CD4-positive, alpha-beta T cell (primary cell): ENCODE measurements at regions of chr14 and their contacts with region 1.

Region 1: GRCh38 chr14:61321385-61322010 is at the start of gene PRKCH:
- DNase-seq: peak; percentile 72 to 93 (median 84)
- ATAC-seq: peak; percentile 73
- H3K4me3 ChIP-seq: peak within 1 kb of the TSS; percentile 95
- H3K4me3 Mint-ChIP-seq: peak within 1 kb of the TSS; percentile 96
- H3K27ac ChIP-seq: peak within 1 kb of the TSS; percentile 66 to 87
- H3K27ac Mint-ChIP-seq: no peak within 1 kb of the TSS
- H3K4me1 ChIP-seq: peaks cover 22% of the 10 kb centered on the region
- H3K4me1 Mint-ChIP-seq: peaks cover 26% of the 10 kb centered on the region
- H3K27me3 ChIP-seq: no peaks in the 10 kb centered on the region
- H3K27me3 Mint-ChIP-seq: no peaks in the 10 kb centered on the region
- CTCF ChIP-seq: peak; percentile 32
- total RNA-seq, gene PRKCH: 378 to 385 TPM

Region 2: GRCh38 chr14:61335671-61336275 is 14.3 kb after region 1 on chr14:
- CTCF ChIA-PET with region 1: interaction called, 29 read pairs
- POLR2A ChIA-PET with region 1: interaction called, 185 read pairs
- intact Hi-C with region 1: loop called (anchors 1 to 2 kb)
- DNase-seq: peak in 5 of 14 experiments; percentile 42 to 83 (median 78)
- ATAC-seq: peak; percentile 62
- H3K4me3 ChIP-seq: peak overlapping the region; percentile 6
- H3K4me3 Mint-ChIP-seq: peak overlapping the region; percentile 87
- H3K27ac ChIP-seq: peak overlapping the region; percentile 85 to 98
- H3K27ac Mint-ChIP-seq: peak overlapping the region; percentile 99
- H3K4me1 ChIP-seq: peaks cover 78% of the 10 kb centered on the region
- H3K4me1 Mint-ChIP-seq: peaks cover 82% of the 10 kb centered on the region
- H3K27me3 ChIP-seq: no peaks in the 10 kb centered on the region
- H3K27me3 Mint-ChIP-seq: no peaks in the 10 kb centered on the region
- CTCF ChIP-seq: no peak

Region 3: GRCh38 chr14:61347826-61348443 is 26.4 kb after region 1 on chr14:
- CTCF ChIA-PET with region 1: interaction called, 9 read pairs
- POLR2A ChIA-PET with region 1: interaction called, 41 read pairs
- intact Hi-C with region 1: no loop called
- DNase-seq: peak in 2 of 14 experiments; percentile 45 to 52
- ATAC-seq: no peak
- H3K4me3 ChIP-seq: peak overlapping the region; percentile 44
- H3K4me3 Mint-ChIP-seq: peak overlapping the region; percentile 83
- H3K27ac ChIP-seq: peak overlapping the region; percentile 67 to 88
- H3K27ac Mint-ChIP-seq: peak overlapping the region; percentile 99
- H3K4me1 ChIP-seq: peaks cover 87% of the 10 kb centered on the region
- H3K4me1 Mint-ChIP-seq: peaks cover 97% of the 10 kb centered on the region
- H3K27me3 ChIP-seq: no peaks in the 10 kb centered on the region
- H3K27me3 Mint-ChIP-seq: no peaks in the 10 kb centered on the region
- CTCF ChIP-seq: no peak

Region 4: GRCh38 chr14:61381547-61381946 is 60.0 kb after region 1 on chr14:
- CTCF ChIA-PET with region 1: interaction called, 9 read pairs
- POLR2A ChIA-PET with region 1: interaction called, 21 read pairs
- intact Hi-C with region 1: loop called (anchors 1 to 5 kb)
- DNase-seq: no peak
- ATAC-seq: no peak
- H3K4me3 ChIP-seq: no peak overlapping the region
- H3K4me3 Mint-ChIP-seq: peak overlapping the region; percentile 47
- H3K27ac ChIP-seq: peak overlapping the region; percentile 14 to 38
- H3K27ac Mint-ChIP-seq: no peak overlapping the region
- H3K4me1 ChIP-seq: peaks cover 87% of the 10 kb centered on the region
- H3K4me1 Mint-ChIP-seq: no peaks in the 10 kb centered on the region
- H3K27me3 ChIP-seq: no peaks in the 10 kb centered on the region
- H3K27me3 Mint-ChIP-seq: no peaks in the 10 kb centered on the region
- CTCF ChIP-seq: no peak

Region 5: GRCh38 chr14:61395115-61395725 is 73.7 kb after region 1 on chr14:
- CTCF ChIA-PET with region 1: interaction called, 6 read pairs
- POLR2A ChIA-PET with region 1: interaction called, 14 read pairs
- intact Hi-C with region 1: loop called in 1 of 2 experiments (anchors 5 kb)
- DNase-seq: peak in 3 of 14 experiments; percentile 24 to 48 (median 47)
- ATAC-seq: peak; percentile 50
- H3K4me3 ChIP-seq: no peak overlapping the region
- H3K4me3 Mint-ChIP-seq: peak overlapping the region; percentile 64
- H3K27ac ChIP-seq: no peak overlapping the region
- H3K27ac Mint-ChIP-seq: peak overlapping the region; percentile 82
- H3K4me1 ChIP-seq: peaks cover 56% of the 10 kb centered on the region
- H3K4me1 Mint-ChIP-seq: peaks cover 99% of the 10 kb centered on the region
- H3K27me3 ChIP-seq: no peaks in the 10 kb centered on the region
- H3K27me3 Mint-ChIP-seq: no peaks in the 10 kb centered on the region
- CTCF ChIP-seq: no peak

Region 6: GRCh38 chr14:61438860-61439684 is 117.6 kb after region 1 on chr14:
- CTCF ChIA-PET with region 1: interaction called, 3 read pairs
- POLR2A ChIA-PET with region 1: interaction called, 5 read pairs
- intact Hi-C with region 1: loop called in 1 of 2 experiments (anchors 2 kb)
- DNase-seq: peak in 8 of 14 experiments; percentile 16 to 76 (median 54)
- ATAC-seq: peak; percentile 65
- H3K4me3 ChIP-seq: peak overlapping the region; percentile 19
- H3K4me3 Mint-ChIP-seq: peak overlapping the region; percentile 72
- H3K27ac ChIP-seq: peak overlapping the region; percentile 45 to 53
- H3K27ac Mint-ChIP-seq: peak overlapping the region; percentile 83
- H3K4me1 ChIP-seq: peaks cover 78% of the 10 kb centered on the region
- H3K4me1 Mint-ChIP-seq: peaks cover 91% of the 10 kb centered on the region
- H3K27me3 ChIP-seq: no peaks in the 10 kb centered on the region
- H3K27me3 Mint-ChIP-seq: no peaks in the 10 kb centered on the region
- CTCF ChIP-seq: no peak

Region 7: DNA sequence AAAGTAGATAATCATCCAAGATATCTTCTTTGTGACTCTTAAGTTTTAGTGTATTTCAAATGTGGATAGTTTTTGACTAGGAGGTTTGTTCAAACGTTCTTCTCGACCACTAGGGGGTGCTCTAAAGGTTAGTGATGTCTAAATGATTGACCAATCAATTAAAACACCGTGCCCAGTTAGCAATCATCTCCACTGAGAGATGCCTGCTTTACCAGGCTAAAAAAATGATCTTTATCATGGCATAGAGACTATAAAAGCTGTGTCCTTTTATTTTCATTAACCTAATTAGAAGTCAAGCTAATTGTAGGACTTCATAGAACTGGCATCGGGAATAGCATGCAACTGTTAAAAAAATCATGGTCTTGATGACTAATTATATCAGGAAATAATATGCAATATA is 153.8 kb after region 1 on chr14:
- CTCF ChIA-PET with region 1: no interaction called
- POLR2A ChIA-PET with region 1: interaction called, 12 read pairs
- intact Hi-C with region 1: no loop called
- DNase-seq: peak in 3 of 14 experiments; percentile 71 to 80 (median 76)
- ATAC-seq: no peak
- H3K4me3 ChIP-seq: no peak overlapping the region
- H3K4me3 Mint-ChIP-seq: peak overlapping the region; percentile 5
- H3K27ac ChIP-seq: peak overlapping the region; percentile 95 to 97
- H3K27ac Mint-ChIP-seq: peak overlapping the region; percentile 84
- H3K4me1 ChIP-seq: peaks cover 86% of the 10 kb centered on the region
- H3K4me1 Mint-ChIP-seq: peaks cover 96% of the 10 kb centered on the region
- H3K27me3 ChIP-seq: no peaks in the 10 kb centered on the region
- H3K27me3 Mint-ChIP-seq: no peaks in the 10 kb centered on the region
- CTCF ChIP-seq: peak; percentile 71